Tibial artery (tissue), 4 donors: ENCODE measurements at regions of chr6 and their contacts with region 1.

Region 1: GRCh38 chr6:83403191-83403590 is 27.7 kb downstream of the ME1 start:
- DNase-seq: no peak
- H3K4me3 ChIP-seq: no peak overlapping the region
- H3K27ac ChIP-seq: no peak overlapping the region
- H3K4me1 ChIP-seq: no peaks in the 10 kb centered on the region
- H3K27me3 ChIP-seq: no peaks in the 10 kb centered on the region
- CTCF ChIP-seq: no peak

Region 2: DNA sequence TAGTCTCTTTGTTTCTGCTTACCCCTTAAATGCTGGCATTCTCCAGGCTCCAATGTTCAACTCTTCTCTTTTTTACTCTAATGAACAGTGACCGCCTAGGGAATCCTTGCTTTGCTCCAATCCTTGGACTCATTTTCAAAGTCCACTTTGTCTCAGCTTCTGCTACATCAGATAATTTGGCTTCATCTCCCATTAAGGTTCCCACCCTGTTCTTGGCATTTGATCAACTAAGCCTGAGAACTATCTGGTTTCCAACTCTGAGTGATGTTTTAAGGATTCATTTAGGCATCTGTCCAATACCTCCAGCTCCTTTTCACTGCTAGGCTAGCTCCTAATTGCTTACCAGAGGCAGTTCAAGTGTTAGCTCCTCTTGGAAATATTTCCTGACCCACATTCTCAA is 37.3 kb before region 1 on chr6:
- intact Hi-C with region 1: no loop called
- DNase-seq: no peak
- H3K4me3 ChIP-seq: no peak overlapping the region
- H3K27ac ChIP-seq: no peak overlapping the region
- H3K4me1 ChIP-seq: peaks cover 0 to 18% (median 1%) of the 10 kb centered on the region in 4 donors
- H3K27me3 ChIP-seq: no peaks in the 10 kb centered on the region
- CTCF ChIP-seq: no peak

Region 3: GRCh38 chr6:83609248-83609647 is 206.1 kb after region 1 on chr6:
- intact Hi-C with region 1: loop called (anchors 5 kb)
- DNase-seq: no peak
- H3K4me3 ChIP-seq: no peak overlapping the region
- H3K27ac ChIP-seq: no peak overlapping the region
- H3K4me1 ChIP-seq: no peaks in the 10 kb centered on the region
- H3K27me3 ChIP-seq: no peaks in the 10 kb centered on the region
- CTCF ChIP-seq: no peak